Gastrocnemius medialis (tissue), 4 donors: ENCODE measurements at regions of chr6 and their contacts with region 1.

Region 1: GRCh38 chr6:36594029-36594815 is at the start of gene SRSF3:
- DNase-seq: peak; percentile 96 to 97
- ATAC-seq: peak; percentile 93 to 95
- H3K4me3 ChIP-seq: peak within 1 kb of the TSS; percentile 69 to 94 (median 78)
- H3K27ac ChIP-seq: peak within 1 kb of the TSS; percentile 93 to 99 (median 97)
- H3K4me1 ChIP-seq: peaks cover 28 to 36% of the 10 kb centered on the region in 2 donors
- H3K27me3 ChIP-seq: no peaks in the 10 kb centered on the region
- CTCF ChIP-seq: peak; percentile 30 to 70 (median 66)
- POLR2A ChIP-seq: peak; percentile 100
- total RNA-seq, gene SRSF3: 66.3 to 118 (median 83.2) TPM

Region 2: DNA sequence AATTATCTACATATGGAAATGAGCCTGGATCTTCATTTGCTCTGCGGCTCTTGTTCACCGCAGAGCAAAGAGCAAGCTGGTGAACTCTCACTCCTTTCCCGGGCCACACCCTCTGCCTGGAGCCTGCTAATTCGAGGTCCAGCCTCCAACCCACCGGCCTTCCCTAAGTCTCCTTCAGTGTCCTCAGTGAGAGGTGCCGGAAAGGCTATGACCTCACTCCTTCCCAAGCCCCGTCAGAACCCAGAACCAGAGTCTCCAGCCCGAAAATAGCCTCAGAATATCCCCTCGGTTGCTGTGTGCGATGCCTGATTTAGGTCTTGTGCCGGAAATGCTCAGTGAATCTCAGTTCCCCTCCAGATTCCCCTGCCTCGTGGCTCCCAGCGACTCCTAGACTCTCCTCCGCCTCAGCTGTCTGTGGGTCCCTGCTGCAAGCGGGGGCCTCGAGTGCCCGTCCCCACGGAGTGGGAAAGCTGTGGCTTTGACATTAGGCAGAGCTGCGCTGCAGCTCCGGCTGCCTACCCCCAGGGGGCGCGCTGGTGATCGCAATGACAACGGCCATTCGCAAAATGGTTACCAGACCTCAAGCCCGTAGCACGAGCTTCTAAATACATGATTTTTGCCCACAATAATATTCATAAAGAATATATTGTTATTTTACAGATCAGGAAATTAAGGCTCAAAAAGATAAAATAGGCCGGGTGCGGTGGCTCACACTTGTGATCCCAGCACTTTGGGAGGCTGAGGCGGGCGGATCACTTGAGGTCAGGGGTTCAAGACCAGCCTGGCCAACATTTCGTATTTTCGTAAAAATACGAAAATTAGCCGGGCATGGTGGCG is 253.4 kb before region 1 on chr6:
- in situ Hi-C with region 1: no loop called
- intact Hi-C with region 1: no loop called
- DNase-seq: peak in 1 of 2 donors; percentile 50
- ATAC-seq: peak; percentile 72 to 82
- H3K4me3 ChIP-seq: peak overlapping the region in 1 of 4 donors; percentile 0
- H3K27ac ChIP-seq: peak overlapping the region in 1 of 4 donors; percentile 32
- H3K4me1 ChIP-seq: peaks cover 0 to 4% of the 10 kb centered on the region in 2 donors
- H3K27me3 ChIP-seq: peaks cover 0 to 21% (median 18%) of the 10 kb centered on the region in 3 donors
- CTCF ChIP-seq: peak; percentile 81 to 93 (median 89)
- POLR2A ChIP-seq: no peak

Region 3: DNA sequence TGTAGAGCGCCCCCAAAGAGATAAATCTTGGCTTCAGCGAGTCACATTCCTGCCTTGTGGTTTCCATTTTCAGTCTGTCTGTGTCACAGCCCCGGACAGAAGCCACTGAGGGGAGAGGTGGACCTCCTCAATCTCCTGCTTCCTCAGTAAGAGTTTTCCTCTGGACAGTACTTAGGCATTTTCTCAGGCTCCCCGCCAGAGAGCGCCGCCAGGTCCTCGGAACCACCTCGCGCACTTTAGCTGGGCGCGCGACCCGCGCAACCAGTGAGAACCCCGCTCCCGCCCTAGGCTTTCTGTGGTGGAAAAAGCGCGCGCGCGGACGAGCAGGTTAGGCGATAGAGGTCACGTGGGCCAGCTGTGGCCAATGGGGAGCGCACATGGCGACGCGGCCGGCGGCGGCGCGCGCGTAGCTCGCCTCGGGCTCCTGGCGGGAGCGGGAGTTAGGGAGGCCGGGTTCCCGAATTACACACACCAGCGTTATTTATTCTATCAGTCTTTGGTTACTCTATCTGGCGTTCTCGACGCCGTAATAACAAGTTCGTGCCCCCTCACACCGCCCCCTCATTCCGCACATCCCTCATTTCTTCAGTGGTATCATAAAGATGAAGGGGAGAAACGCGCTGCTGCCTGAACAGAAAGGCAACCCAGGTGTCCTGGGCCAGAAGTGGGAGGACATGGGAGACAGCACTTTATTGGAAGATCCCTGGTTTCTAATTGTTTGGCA is 171.0 kb before region 1 on chr6:
- in situ Hi-C with region 1: loop called in 2 of 4 experiments (anchors 10 to 25 kb)
- intact Hi-C with region 1: loop called (anchors 5 kb)
- DNase-seq: peak; percentile 92 to 97
- ATAC-seq: peak; percentile 96 to 98
- H3K4me3 ChIP-seq: peak overlapping the region; percentile 55 to 66 (median 59)
- H3K27ac ChIP-seq: peak overlapping the region; percentile 78 to 82 (median 80)
- H3K4me1 ChIP-seq: peaks cover 6 to 7% of the 10 kb centered on the region in 2 donors
- H3K27me3 ChIP-seq: no peaks in the 10 kb centered on the region
- CTCF ChIP-seq: peak; percentile 26 to 67 (median 61)
- POLR2A ChIP-seq: peak; percentile 63 to 70

Region 4: GRCh38 chr6:36985808-36986703 is 391.8 kb after region 1 on chr6 and contains the start of gene MTCH1:
- in situ Hi-C with region 1: no loop called
- intact Hi-C with region 1: loop called (anchors 10 kb)
- DNase-seq: peak; percentile 84 to 88
- ATAC-seq: peak; percentile 95 to 96
- H3K4me3 ChIP-seq: peak within 1 kb of the TSS; percentile 96 to 99 (median 98)
- H3K27ac ChIP-seq: peak within 1 kb of the TSS; percentile 92 to 99 (median 96)
- H3K4me1 ChIP-seq: peaks cover 33 to 37% of the 10 kb centered on the region in 2 donors
- H3K27me3 ChIP-seq: no peaks in the 10 kb centered on the region
- CTCF ChIP-seq: peak in 2 of 5 experiments; percentile 29 to 34
- POLR2A ChIP-seq: peak; percentile 97 to 98
- total RNA-seq, gene MTCH1: 85.6 to 127 (median 116) TPM